ENCODE measurements at regions of chr16 and their contacts with region 1.

Region 1: GRCh38 chr16:89791278-89791995 is 25.0 kb downstream of the FANCA start:
- DNase-seq: no peak
- ATAC-seq: no peak
- H3K4me3 ChIP-seq: no peak overlapping the region
- H3K27ac ChIP-seq: no peak overlapping the region
- H3K4me1 ChIP-seq: no peaks in the 10 kb centered on the region
- H3K27me3 ChIP-seq: no peaks in the 10 kb centered on the region
- CTCF ChIP-seq: no peak

Region 2: GRCh38 chr16:89525146-89525913 is 266.1 kb before region 1 on chr16:
- intact Hi-C with region 1: no loop called
- DNase-seq: peak in 1 of 2 donors; percentile 83
- ATAC-seq: peak; percentile 89 to 93 (median 91)
- H3K4me3 ChIP-seq: no peak overlapping the region
- H3K27ac ChIP-seq: peak overlapping the region; percentile 83
- H3K4me1 ChIP-seq: peaks cover 8% of the 10 kb centered on the region
- H3K27me3 ChIP-seq: no peaks in the 10 kb centered on the region
- CTCF ChIP-seq: no peak

Region 3: GRCh38 chr16:89700100-89700648 is 91.3 kb before region 1 on chr16:
- intact Hi-C with region 1: loop called (anchors 5 kb)
- DNase-seq: peak; percentile 97 to 99
- ATAC-seq: peak; percentile 84 to 90 (median 86)
- H3K4me3 ChIP-seq: peak overlapping the region; percentile 69
- H3K27ac ChIP-seq: peak overlapping the region; percentile 32
- H3K4me1 ChIP-seq: peaks cover 20% of the 10 kb centered on the region
- H3K27me3 ChIP-seq: peaks cover 0 to 45% (median 0%) of the 10 kb centered on the region in 3 donors
- CTCF ChIP-seq: peak; percentile 64

Region 4: GRCh38 chr16:89708441-89708931 is 83.0 kb before region 1 on chr16:
- intact Hi-C with region 1: loop called (anchors 5 kb)
- DNase-seq: no peak
- ATAC-seq: no peak
- H3K4me3 ChIP-seq: no peak overlapping the region
- H3K27ac ChIP-seq: no peak overlapping the region
- H3K4me1 ChIP-seq: no peaks in the 10 kb centered on the region
- H3K27me3 ChIP-seq: peaks cover 0 to 19% (median 0%) of the 10 kb centered on the region in 3 donors
- CTCF ChIP-seq: no peak

Measured in psoas muscle (tissue), 8 donors.